A673 (cell line): ENCODE measurements at regions of chr11 and their contacts with region 1.

Region 1: DNA sequence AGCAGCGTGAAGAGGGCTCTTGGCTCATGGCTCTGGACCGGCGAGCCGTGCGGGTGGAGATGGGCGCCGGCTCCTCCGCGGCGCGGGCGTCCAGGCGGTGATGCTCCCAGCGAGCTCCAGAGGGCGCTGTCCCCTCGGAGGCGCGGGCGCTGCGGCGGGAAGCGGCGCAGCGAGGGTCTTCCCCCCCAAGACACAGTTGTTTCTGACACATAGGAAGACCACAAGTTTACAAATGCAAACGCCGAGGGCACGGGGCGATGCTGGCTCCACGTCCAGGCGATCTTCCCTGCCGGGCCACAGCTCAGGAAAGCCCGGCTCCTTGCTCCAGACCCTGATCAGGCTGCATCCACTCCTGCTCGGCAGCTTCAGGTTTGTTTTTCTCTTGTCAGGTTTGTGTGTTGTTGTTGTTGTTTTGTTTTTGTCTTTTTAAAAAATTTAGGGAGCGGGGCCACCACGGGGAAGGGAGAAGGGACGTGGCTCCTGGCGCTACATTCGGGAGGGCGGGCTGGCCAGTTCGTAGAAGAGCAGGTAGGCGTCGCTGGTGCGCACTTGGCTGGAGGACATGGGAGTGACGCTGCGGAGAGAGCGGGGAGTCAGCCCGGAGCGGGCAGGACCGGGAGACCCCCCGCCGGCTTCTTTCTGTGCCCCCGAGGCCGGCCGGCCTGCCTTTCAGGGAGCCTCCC is 10.0 kb upstream of the MFRP start:
- DNase-seq: peak; percentile 93
- H3K4me3 ChIP-seq: peak overlapping the region; percentile 64
- H3K27ac ChIP-seq: peak overlapping the region; percentile 79
- H3K4me1 ChIP-seq: peaks cover 9% of the 10 kb centered on the region
- H3K27me3 ChIP-seq: no peaks in the 10 kb centered on the region
- CTCF ChIP-seq: peak; percentile 95

Region 2: GRCh38 chr11:119373921-119374631 is 17.6 kb after region 1 on chr11:
- CTCF ChIA-PET with region 1: interaction called, 34 read pairs
- POLR2A ChIA-PET with region 1: no interaction called
- intact Hi-C with region 1: loop called (anchors 2 kb)
- DNase-seq: peak; percentile 89
- H3K4me3 ChIP-seq: no peak overlapping the region
- H3K27ac ChIP-seq: no peak overlapping the region
- H3K4me1 ChIP-seq: peaks cover 21% of the 10 kb centered on the region
- H3K27me3 ChIP-seq: no peaks in the 10 kb centered on the region
- CTCF ChIP-seq: peak; percentile 98

Region 3: DNA sequence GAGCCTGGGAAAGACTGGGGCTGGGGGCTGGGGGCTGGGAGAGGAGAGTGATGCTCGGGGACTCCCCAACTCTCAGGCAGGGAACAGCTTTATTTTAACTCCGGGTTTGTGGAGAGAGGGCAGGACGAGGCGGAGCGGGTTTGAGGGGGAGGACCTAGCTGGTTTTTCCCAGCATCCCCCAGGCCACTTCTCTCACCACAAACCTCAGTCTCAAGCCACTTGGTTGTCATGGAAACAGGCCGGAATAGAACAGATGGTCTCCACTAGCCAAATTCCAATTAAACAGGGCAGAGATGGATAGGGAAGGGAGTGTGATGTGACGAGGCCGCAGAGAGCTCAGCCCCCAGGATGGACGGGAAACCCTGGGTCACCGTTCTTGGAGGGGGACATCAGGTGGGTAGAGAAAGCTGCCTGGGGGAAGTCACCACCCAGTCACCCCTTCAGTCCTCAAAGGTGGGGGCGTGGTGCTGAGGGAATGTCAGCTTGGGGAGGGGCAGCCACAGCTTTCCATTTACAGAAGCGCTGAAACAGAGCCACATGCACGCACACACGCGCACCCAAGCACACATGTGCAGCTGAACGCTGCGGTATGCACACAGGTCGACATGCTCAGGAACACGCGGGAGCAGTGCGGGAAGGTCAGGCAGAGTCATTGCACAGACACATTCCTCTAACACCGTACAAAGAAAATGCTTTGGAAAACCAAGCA is 353.3 kb after region 1 on chr11:
- CTCF ChIA-PET with region 1: no interaction called
- POLR2A ChIA-PET with region 1: no interaction called
- intact Hi-C with region 1: no loop called
- DNase-seq: peak; percentile 60
- H3K4me3 ChIP-seq: no peak overlapping the region
- H3K27ac ChIP-seq: no peak overlapping the region
- H3K4me1 ChIP-seq: no peaks in the 10 kb centered on the region
- H3K27me3 ChIP-seq: no peaks in the 10 kb centered on the region
- CTCF ChIP-seq: no peak

Region 4: GRCh38 chr11:119782739-119783072 is 426.2 kb after region 1 on chr11:
- CTCF ChIA-PET with region 1: no interaction called
- POLR2A ChIA-PET with region 1: no interaction called
- intact Hi-C with region 1: no loop called
- DNase-seq: no peak
- H3K4me3 ChIP-seq: no peak overlapping the region
- H3K27ac ChIP-seq: no peak overlapping the region
- H3K4me1 ChIP-seq: no peaks in the 10 kb centered on the region
- H3K27me3 ChIP-seq: peaks cover 7% of the 10 kb centered on the region
- CTCF ChIP-seq: no peak